WTC11 (cell line): ENCODE measurements at regions of chr12 and their contacts with region 1.

Region 1: GRCh38 chr12:68223083-68223747 is 2.4 kb downstream of the IL26 start:
- DNase-seq: peak; percentile 83
- ATAC-seq: peak; percentile 99
- H3K4me3 Mint-ChIP-seq: peak overlapping the region; percentile 14; the same call in 1 of the 2 replicates
- H3K27ac Mint-ChIP-seq: 0 out of 2 replicates have a peak overlapping the region, but pooled peaks have one; percentile 60
- H3K4me1 Mint-ChIP-seq: peaks cover 11% of the 10 kb centered on the region
- H3K27me3 Mint-ChIP-seq: no peaks in the 10 kb centered on the region
- CTCF ChIP-seq: peak; percentile 76

Region 2: DNA sequence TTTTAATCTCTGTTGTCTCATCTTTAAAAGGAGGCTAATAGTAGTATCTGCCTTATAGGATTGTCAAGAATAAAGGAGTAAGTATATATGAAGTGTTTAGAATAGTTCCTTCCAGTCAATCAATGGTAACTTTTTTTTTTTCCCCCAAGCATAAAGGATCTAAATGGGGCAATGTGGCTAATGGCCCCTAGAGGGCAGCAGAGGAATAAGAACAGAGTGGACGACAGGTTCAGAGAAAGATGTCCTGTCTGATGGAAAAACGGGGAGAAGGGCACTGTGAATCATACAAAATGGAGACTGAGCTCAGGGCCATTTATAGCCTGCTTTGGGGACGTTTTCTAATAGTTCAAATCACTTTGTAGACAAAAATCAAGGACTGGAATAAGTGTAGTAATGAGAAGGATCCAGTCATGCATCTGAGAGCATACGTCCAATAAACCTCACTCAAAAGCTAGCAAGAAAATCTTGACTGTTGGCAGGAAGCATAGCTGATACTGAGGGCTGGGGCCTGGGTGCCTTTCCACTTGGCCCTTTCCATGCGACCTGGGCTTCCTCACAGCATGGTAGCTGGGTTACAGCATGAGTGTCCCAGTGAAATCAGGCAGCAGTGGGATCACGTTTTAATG is 182.7 kb before region 1 on chr12:
- CTCF ChIA-PET with region 1: interaction called, 26 read pairs
- POLR2A ChIA-PET with region 1: no interaction called
- DNase-seq: peak; percentile 65
- ATAC-seq: peak; percentile 95
- H3K4me3 Mint-ChIP-seq: no peak overlapping the region
- H3K27ac Mint-ChIP-seq: no peak overlapping the region
- H3K4me1 Mint-ChIP-seq: peaks cover 4% of the 10 kb centered on the region; the same call in 1 of the 2 replicates
- H3K27me3 Mint-ChIP-seq: no peaks in the 10 kb centered on the region
- CTCF ChIP-seq: peak; percentile 72

Region 3: GRCh38 chr12:68267892-68268396 is 44.7 kb after region 1 on chr12:
- CTCF ChIA-PET with region 1: no interaction called
- POLR2A ChIA-PET with region 1: no interaction called
- DNase-seq: no peak
- ATAC-seq: no peak
- H3K4me3 Mint-ChIP-seq: no peak overlapping the region
- H3K27ac Mint-ChIP-seq: no peak overlapping the region
- H3K4me1 Mint-ChIP-seq: no peaks in the 10 kb centered on the region
- H3K27me3 Mint-ChIP-seq: no peaks in the 10 kb centered on the region
- CTCF ChIP-seq: no peak

Region 4: GRCh38 chr12:68317047-68317667 is 93.9 kb after region 1 on chr12:
- CTCF ChIA-PET with region 1: interaction called, 14 read pairs
- POLR2A ChIA-PET with region 1: no interaction called
- DNase-seq: no peak
- ATAC-seq: no peak
- H3K4me3 Mint-ChIP-seq: no peak overlapping the region
- H3K27ac Mint-ChIP-seq: no peak overlapping the region
- H3K4me1 Mint-ChIP-seq: no peaks in the 10 kb centered on the region
- H3K27me3 Mint-ChIP-seq: no peaks in the 10 kb centered on the region
- CTCF ChIP-seq: peak; percentile 60